ENCODE measurements at regions of chr17 and their contacts with region 1.

Region 1: GRCh38 chr17:38868817-38869525 is 887 bp upstream of the LASP1 start:
- DNase-seq: peak; percentile 90
- H3K4me3 ChIP-seq: peak overlapping the region; percentile 98
- H3K27ac ChIP-seq: peak overlapping the region; percentile 91
- H3K4me1 ChIP-seq: peaks cover 56% of the 10 kb centered on the region
- CTCF ChIP-seq: peak; percentile 84

Region 2: DNA sequence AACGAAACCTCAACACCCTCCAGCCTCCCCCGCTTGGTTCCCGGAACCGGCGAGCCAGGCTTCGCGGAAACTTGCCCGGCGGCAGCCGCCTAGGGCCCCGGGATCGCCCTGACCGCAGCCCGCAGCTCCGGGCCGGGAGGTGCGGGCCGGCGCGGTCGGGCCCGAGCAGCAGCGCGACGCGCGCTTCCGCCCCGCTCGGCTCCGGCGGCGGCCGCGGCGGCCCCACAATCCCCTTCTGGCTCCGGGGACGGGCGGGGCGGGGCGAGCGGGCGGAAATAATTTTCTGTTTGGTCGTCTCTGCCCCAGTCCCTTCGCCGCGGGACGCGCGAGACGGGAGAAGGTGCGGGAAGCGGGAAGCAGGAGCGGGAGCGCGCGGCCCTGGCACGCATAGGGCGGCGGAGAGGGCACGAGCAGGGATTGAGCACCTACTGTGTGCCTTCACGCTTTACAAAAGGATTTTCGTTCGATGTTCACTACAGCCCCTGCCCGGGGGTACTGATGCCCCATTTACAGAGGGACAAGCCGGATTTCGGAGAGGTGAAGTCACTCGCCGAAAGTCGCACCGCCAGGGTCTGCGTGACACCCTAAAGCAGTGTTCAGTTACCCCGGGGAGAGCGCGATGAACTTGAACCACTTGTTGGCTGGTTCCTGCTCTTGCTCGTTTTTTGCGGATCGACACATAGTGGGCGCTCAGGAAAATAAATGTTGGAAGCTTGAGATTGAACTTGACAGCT is 166.6 kb before region 1 on chr17:
- CTCF ChIA-PET with region 1: no interaction called
- POLR2A ChIA-PET with region 1: interaction called, 4 read pairs
- intact Hi-C with region 1: loop called (anchors 1 kb)
- DNase-seq: peak; percentile 85
- H3K4me3 ChIP-seq: peak overlapping the region; percentile 81
- H3K27ac ChIP-seq: peak overlapping the region; percentile 92
- H3K4me1 ChIP-seq: peaks cover 36% of the 10 kb centered on the region
- CTCF ChIP-seq: no peak

Region 3: GRCh38 chr17:38799378-38800236 is 69.4 kb before region 1 on chr17 and contains the start of gene PIP4K2B:
- CTCF ChIA-PET with region 1: no interaction called
- POLR2A ChIA-PET with region 1: interaction called, 4 read pairs
- intact Hi-C with region 1: loop called (anchors 1 kb)
- DNase-seq: peak; percentile 97
- H3K4me3 ChIP-seq: peak within 1 kb of the TSS; percentile 97
- H3K27ac ChIP-seq: peak within 1 kb of the TSS; percentile 80
- H3K4me1 ChIP-seq: peaks cover 21% of the 10 kb centered on the region
- CTCF ChIP-seq: 0 out of 2 replicates have a peak, but pooled peaks have one; percentile 2
- total RNA-seq, gene PIP4K2B: 23.6 and 33.0 TPM in 2 replicates

Region 4: DNA sequence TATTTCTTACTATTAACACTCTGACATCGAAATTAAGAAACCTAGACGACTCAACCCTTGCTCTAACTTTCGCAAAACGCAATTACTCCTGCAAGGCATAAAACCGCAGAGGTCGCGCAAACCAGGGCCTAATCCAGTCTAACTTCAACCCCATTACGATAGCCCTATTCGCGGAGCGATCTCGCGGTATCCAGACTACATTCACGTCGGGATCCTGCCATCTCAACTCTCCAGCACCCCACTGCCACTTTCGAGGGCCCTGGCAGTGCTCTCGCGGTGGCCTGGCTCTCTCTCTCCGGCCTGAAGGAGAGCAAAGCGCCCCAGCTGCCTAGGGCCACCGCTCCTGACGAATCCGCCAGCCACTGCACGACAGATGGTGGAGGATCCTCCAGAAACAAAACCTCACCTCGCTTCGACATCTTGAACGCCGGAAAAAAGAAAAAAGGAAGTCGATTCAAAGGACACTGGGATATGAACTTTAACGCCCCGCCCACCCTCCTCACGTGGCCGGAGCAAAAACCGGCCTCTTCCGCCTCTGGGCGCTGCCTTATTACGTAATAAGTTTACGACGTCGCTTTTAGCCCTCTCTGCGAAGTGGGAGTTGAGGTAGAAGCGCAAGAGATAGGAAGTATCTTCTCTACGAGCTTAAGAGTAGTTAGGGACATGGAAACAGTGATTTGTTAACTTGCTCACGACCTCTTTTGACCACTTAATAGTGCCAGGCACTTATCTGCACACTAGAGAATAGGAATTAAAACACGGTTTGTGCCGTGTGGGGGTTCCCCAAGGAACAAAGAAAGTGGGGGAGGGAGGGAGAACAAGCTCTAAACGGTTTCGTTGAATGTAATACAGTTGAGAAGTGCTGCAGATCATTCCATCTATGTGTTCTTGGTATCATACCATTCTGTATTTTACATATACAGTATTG is 15.4 kb before region 1 on chr17 and contains the start of gene RPL23:
- CTCF ChIA-PET with region 1: interaction called, 5 read pairs
- POLR2A ChIA-PET with region 1: interaction called, 56 read pairs
- intact Hi-C with region 1: loop called (anchors 1 kb)
- DNase-seq: peak; percentile 99
- H3K4me3 ChIP-seq: peak within 1 kb of the TSS; percentile 87
- H3K27ac ChIP-seq: peak within 1 kb of the TSS; percentile 96
- H3K4me1 ChIP-seq: peaks cover 42% of the 10 kb centered on the region
- CTCF ChIP-seq: no peak
- total RNA-seq, gene RPL23: 1,289 and 1,881 TPM in 2 replicates

Region 5: GRCh38 chr17:38908676-38909181 is 39.8 kb after region 1 on chr17:
- CTCF ChIA-PET with region 1: no interaction called
- POLR2A ChIA-PET with region 1: interaction called, 4 read pairs
- intact Hi-C with region 1: loop called (anchors 2 kb)
- DNase-seq: peak; percentile 56
- H3K4me3 ChIP-seq: no peak overlapping the region
- H3K27ac ChIP-seq: peak overlapping the region; percentile 14
- H3K4me1 ChIP-seq: peaks cover 27% of the 10 kb centered on the region
- CTCF ChIP-seq: no peak

Region 6: GRCh38 chr17:38967290-38967738 is 98.3 kb after region 1 on chr17 and contains the start of gene FBXO47:
- CTCF ChIA-PET with region 1: no interaction called
- POLR2A ChIA-PET with region 1: no interaction called
- intact Hi-C with region 1: loop called (anchors 5 kb)
- DNase-seq: peak; percentile 93
- H3K4me3 ChIP-seq: peak within 1 kb of the TSS; percentile 57
- H3K27ac ChIP-seq: peak within 1 kb of the TSS; percentile 33
- H3K4me1 ChIP-seq: peaks cover 13% of the 10 kb centered on the region
- CTCF ChIP-seq: 0 out of 2 replicates have a peak, but pooled peaks have one; percentile 4
- total RNA-seq, gene FBXO47: not detected in 2 replicates